ENCODE measurements at regions of chr16 and their contacts with region 1.

Region 1: DNA sequence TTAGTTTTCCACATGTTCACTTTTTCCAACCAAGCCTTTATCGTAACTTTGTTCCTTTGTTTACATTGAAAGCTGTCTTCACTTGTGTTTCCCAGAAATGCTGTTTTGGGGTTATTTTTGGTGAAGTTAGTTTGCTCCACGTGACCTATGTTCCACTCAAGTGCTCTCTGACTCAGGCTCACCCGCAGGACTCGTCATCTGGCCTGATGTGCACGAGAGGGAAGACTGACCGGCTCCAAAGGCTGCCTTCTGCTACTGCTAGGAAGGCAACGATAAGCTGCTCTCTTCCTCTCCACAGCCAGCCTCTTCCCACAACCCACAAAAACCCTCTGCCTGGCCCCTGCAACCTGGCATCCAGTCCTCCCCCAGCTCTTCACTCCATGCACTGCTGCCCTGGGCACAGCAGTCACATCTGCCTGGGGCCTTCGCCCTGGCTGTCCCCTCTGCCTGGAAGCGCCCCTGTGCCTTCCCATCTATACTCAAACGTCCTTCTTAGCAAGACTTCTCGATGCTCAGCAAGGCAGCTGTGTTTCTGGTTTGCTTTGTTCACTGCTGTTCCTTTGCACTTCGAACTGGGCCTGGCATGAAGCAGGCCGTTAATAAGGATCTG is 28.0 kb downstream of the ZCCHC14 start:
- DNase-seq: peak; percentile 86
- ATAC-seq: peak; percentile 90 to 94

Region 2: DNA sequence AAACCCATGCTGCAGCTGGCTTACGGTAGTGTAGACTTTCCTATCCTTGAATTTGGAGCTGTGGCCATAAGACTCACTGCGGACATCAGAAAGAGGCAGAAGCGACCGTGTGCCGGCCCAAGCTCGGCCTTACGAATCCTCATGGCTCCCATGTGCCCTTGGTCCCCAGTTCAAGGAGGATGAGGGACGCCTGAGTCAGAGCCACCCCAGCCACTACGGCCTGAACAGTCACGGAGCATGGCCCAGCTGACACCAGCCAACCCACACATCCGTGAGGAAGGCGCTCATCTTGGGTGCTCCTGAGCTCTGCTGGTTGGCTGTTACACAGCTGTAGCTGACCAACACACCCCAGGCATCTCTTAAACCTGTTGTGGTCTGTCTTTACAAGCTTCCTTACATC is 15.9 kb before region 1 on chr16:
- intact Hi-C with region 1: loop called in 1 of 2 experiments (anchors 1 kb)
- DNase-seq: no peak
- ATAC-seq: no peak

Region 3: GRCh38 chr16:87491522-87492293 is 26.9 kb after region 1 on chr16:
- intact Hi-C with region 1: loop called in 1 of 2 experiments (anchors 2 kb)
- DNase-seq: peak; percentile 43
- ATAC-seq: no peak

Region 4: GRCh38 chr16:87681981-87682570 is 217.3 kb after region 1 on chr16:
- intact Hi-C with region 1: no loop called
- DNase-seq: no peak
- ATAC-seq: no peak